K562 (cell line): ENCODE measurements at regions of chr10 and their contacts with region 1.

Region 1: GRCh38 chr10:15824498-15824897 is 35.8 kb downstream of the MINDY3 start:
- DNase-seq: no peak
- ATAC-seq: no peak
- H3K4me3 ChIP-seq: no peak overlapping the region
- H3K27ac ChIP-seq: no peak overlapping the region
- H3K4me1 ChIP-seq: no peaks in the 10 kb centered on the region
- H3K27me3 ChIP-seq: no peaks in the 10 kb centered on the region
- CTCF ChIP-seq: peak in 1 of 3 experiments; percentile 60; a peak in 3 of 6 replicates
- EP300 ChIP-seq: no peak
- POLR2A ChIP-seq: no peak
- RAD21 ChIP-seq: peak; percentile 36 to 64; a peak in 3 of 4 replicates

Region 2: DNA sequence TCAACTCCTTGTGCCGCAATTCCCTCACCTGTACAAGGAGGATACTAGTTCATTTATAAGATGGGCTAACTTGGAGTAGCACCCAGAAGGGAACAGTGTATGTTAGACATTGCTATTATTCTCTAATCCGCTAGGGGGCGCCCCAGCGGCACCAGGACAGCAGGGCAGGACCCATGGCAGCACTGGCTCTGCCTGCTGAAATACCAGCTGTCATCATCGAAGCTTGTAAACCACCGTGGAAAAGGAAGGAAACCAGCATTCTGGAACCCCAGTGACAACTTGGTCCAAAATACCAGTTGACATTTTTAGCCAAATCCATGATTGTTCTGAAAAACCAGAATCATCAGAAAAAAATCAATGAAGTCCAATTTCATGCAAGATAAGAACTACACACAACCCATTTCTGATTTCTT is 239.2 kb before region 1 on chr10:
- CTCF ChIA-PET with region 1: no interaction called
- POLR2A ChIA-PET with region 1: no interaction called
- in situ Hi-C with region 1: no loop called
- intact Hi-C with region 1: loop called (anchors 10 kb)
- DNase-seq: peak; percentile 69 to 80 (median 71)
- ATAC-seq: peak; percentile 96
- H3K4me3 ChIP-seq: no peak overlapping the region
- H3K27ac ChIP-seq: no peak overlapping the region
- H3K4me1 ChIP-seq: peaks cover 0 to 4% of the 10 kb centered on the region in 2 experiments; a peak in 1 of 5 replicates
- H3K27me3 ChIP-seq: no peaks in the 10 kb centered on the region
- CTCF ChIP-seq: peak; percentile 80 to 96 (median 80)
- EP300 ChIP-seq: no peak
- POLR2A ChIP-seq: no peak
- RAD21 ChIP-seq: peak; percentile 83 to 92

Region 3: GRCh38 chr10:15642095-15642494 is 182.4 kb before region 1 on chr10:
- CTCF ChIA-PET with region 1: no interaction called
- POLR2A ChIA-PET with region 1: no interaction called
- in situ Hi-C with region 1: no loop called
- intact Hi-C with region 1: loop called (anchors 10 kb)
- DNase-seq: no peak
- ATAC-seq: no peak
- H3K4me3 ChIP-seq: no peak overlapping the region
- H3K27ac ChIP-seq: no peak overlapping the region
- H3K4me1 ChIP-seq: no peaks in the 10 kb centered on the region
- H3K27me3 ChIP-seq: peaks cover 6 to 12% of the 10 kb centered on the region in 2 experiments; a peak in 3 of 5 replicates
- CTCF ChIP-seq: no peak
- EP300 ChIP-seq: no peak
- POLR2A ChIP-seq: no peak
- RAD21 ChIP-seq: no peak

Region 4: GRCh38 chr10:15672469-15672868 is 152.0 kb before region 1 on chr10:
- CTCF ChIA-PET with region 1: no interaction called
- POLR2A ChIA-PET with region 1: no interaction called
- in situ Hi-C with region 1: no loop called
- intact Hi-C with region 1: no loop called
- DNase-seq: no peak
- ATAC-seq: no peak
- H3K4me3 ChIP-seq: no peak overlapping the region
- H3K27ac ChIP-seq: no peak overlapping the region
- H3K4me1 ChIP-seq: no peaks in the 10 kb centered on the region
- H3K27me3 ChIP-seq: peaks cover 0 to 4% of the 10 kb centered on the region in 2 experiments; a peak in 1 of 5 replicates
- CTCF ChIP-seq: no peak
- EP300 ChIP-seq: no peak
- POLR2A ChIP-seq: no peak
- RAD21 ChIP-seq: no peak

Region 5: DNA sequence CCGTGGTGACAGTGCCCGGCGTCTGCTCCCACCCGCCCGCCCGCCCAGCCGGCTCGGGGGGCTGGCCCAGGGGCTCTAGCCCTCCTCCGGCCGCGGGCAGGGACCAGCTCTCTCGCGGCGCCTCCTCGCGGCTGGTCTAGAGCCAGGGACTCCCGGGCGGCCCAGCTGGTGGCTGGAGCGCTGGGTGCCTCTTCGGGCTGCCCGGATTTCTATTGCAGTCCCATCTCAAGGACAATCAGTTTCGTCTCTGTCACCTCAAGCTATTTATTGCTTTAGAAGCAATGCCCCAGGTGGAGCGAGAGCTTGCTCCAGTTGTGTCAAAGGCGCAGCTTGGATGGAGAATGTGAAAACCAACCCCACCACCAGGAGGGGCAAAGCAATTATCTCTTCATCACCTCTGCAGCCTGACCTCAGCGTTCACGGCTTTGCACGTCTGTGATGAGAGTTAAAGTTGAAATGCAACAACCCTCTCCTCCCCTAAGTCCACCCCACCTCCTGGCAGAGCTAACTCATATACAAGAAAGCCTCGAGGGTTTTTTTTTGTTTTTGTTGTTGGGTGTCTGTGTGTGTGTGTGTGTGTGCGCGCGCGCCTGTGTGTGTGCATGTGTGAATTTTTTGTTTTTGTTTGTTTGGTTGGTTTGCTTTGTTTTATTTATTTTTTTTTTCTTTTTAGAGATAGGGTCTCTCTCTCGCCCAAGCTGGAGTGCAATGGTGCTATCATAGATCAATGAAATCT is 104.4 kb before region 1 on chr10 and contains the start of gene ITGA8:
- CTCF ChIA-PET with region 1: no interaction called
- POLR2A ChIA-PET with region 1: no interaction called
- in situ Hi-C with region 1: no loop called
- intact Hi-C with region 1: loop called (anchors 5 kb)
- DNase-seq: no peak
- ATAC-seq: no peak
- H3K4me3 ChIP-seq: no peak within 1 kb of the TSS
- H3K27ac ChIP-seq: no peak within 1 kb of the TSS
- H3K4me1 ChIP-seq: no peaks in the 10 kb centered on the region; a peak in 1 of 5 replicates
- H3K27me3 ChIP-seq: peaks cover 0 to 4% of the 10 kb centered on the region in 2 experiments; a peak in 1 of 5 replicates
- CTCF ChIP-seq: peak in 1 of 3 experiments; percentile 9; a peak in 1 of 6 replicates
- EP300 ChIP-seq: no peak
- POLR2A ChIP-seq: no peak
- RAD21 ChIP-seq: no peak
- polyA plus RNA-seq, gene ITGA8: 0.07 TPM in 1 of 2 experiments, not detected in the other

Region 6: DNA sequence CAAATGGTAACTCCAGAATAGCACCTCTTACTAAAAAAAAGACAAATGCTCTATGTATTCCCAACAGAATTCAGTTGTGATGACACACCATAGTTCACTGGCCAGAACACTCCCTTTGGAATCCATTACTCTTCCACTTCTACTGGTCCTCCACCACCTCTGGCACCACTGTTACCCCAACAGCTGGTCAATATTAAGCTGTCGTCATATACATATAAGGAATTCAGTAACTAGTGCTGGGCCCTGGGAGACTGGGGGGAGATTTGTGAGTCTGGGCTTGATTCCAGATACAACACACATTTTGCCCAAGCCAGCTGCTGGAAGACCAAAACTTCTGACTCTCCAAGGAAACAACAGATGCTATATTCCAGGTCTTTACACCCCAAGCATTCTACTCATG is 78.7 kb before region 1 on chr10:
- CTCF ChIA-PET with region 1: no interaction called
- POLR2A ChIA-PET with region 1: no interaction called
- in situ Hi-C with region 1: no loop called
- intact Hi-C with region 1: loop called (anchors 5 kb)
- DNase-seq: no peak
- ATAC-seq: no peak
- H3K4me3 ChIP-seq: no peak overlapping the region
- H3K27ac ChIP-seq: no peak overlapping the region
- H3K4me1 ChIP-seq: no peaks in the 10 kb centered on the region
- H3K27me3 ChIP-seq: no peaks in the 10 kb centered on the region
- CTCF ChIP-seq: no peak
- EP300 ChIP-seq: no peak
- POLR2A ChIP-seq: no peak
- RAD21 ChIP-seq: no peak